ENCODE measurements at regions of chr9 and their contacts with region 1.

Region 1: GRCh38 chr9:272251-273213 is 57.9 kb downstream of the DOCK8 start:
- DNase-seq: peak in 3 of 4 experiments; percentile 26 to 85 (median 58)
- ATAC-seq: peak; percentile 87
- H3K4me3 ChIP-seq: peak overlapping the region; percentile 31; the same call in 1 of the 2 replicates
- H3K27ac ChIP-seq: peak overlapping the region; percentile 98
- H3K4me1 ChIP-seq: peaks cover 0 to 39% of the 10 kb centered on the region in 2 experiments; a peak in 2 of 5 replicates
- H3K27me3 ChIP-seq: no peaks in the 10 kb centered on the region
- CTCF ChIP-seq: no peak
- EP300 ChIP-seq: peak; percentile 90
- POLR2A ChIP-seq: peak; percentile 67
- RAD21 ChIP-seq: 0 out of 4 replicates have a peak, but pooled peaks of 1 of the 2 experiments have one; percentile 19

Region 2: DNA sequence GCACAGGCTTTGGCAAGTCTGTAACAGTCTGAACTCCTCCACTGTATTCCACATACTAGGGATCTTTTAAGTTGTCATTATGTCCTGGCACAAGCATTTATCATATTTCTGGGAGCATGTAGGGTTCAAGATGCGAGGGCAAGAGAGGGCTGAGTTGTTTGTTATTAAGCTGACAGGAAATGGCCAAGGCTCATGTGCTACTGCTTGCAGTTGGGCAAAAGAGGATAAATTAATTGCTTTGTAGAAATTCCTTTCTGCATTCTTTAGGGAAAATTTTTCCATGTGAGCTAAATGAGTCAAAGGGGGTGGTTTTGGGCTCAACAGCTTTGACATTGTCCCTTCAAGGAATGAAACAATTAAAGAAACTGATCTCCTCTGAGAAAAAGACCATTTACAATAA is 22.5 kb before region 1 on chr9:
- CTCF ChIA-PET with region 1: no interaction called
- POLR2A ChIA-PET with region 1: interaction called, 6 read pairs
- in situ Hi-C with region 1: no loop called
- intact Hi-C with region 1: loop called (anchors 1 kb)
- DNase-seq: no peak
- ATAC-seq: no peak
- H3K4me3 ChIP-seq: no peak overlapping the region
- H3K27ac ChIP-seq: peak overlapping the region; percentile 89
- H3K4me1 ChIP-seq: peaks cover 18 to 54% of the 10 kb centered on the region in 2 experiments; a peak in 4 of 5 replicates
- H3K27me3 ChIP-seq: no peaks in the 10 kb centered on the region
- CTCF ChIP-seq: no peak
- EP300 ChIP-seq: no peak
- POLR2A ChIP-seq: no peak
- RAD21 ChIP-seq: no peak

Region 3: GRCh38 chr9:257957-258356 is 14.6 kb before region 1 on chr9:
- CTCF ChIA-PET with region 1: no interaction called
- POLR2A ChIA-PET with region 1: interaction called, 12 read pairs
- in situ Hi-C with region 1: no loop called
- intact Hi-C with region 1: no loop called
- DNase-seq: no peak
- ATAC-seq: no peak; the same call in 2 of the 3 replicates
- H3K4me3 ChIP-seq: no peak overlapping the region
- H3K27ac ChIP-seq: peak overlapping the region; percentile 64; the same call in 2 of the 3 replicates
- H3K4me1 ChIP-seq: peaks cover 7 to 48% of the 10 kb centered on the region in 2 experiments
- H3K27me3 ChIP-seq: no peaks in the 10 kb centered on the region
- CTCF ChIP-seq: no peak
- EP300 ChIP-seq: no peak
- POLR2A ChIP-seq: no peak
- RAD21 ChIP-seq: no peak

Region 4: GRCh38 chr9:286071-286740 is 13.7 kb after region 1 on chr9:
- CTCF ChIA-PET with region 1: no interaction called
- POLR2A ChIA-PET with region 1: interaction called, 14 read pairs
- in situ Hi-C with region 1: no loop called
- intact Hi-C with region 1: no loop called
- DNase-seq: no peak
- ATAC-seq: no peak
- H3K4me3 ChIP-seq: no peak overlapping the region
- H3K27ac ChIP-seq: no peak overlapping the region
- H3K4me1 ChIP-seq: peaks cover 0 to 7% of the 10 kb centered on the region in 2 experiments; a peak in 2 of 5 replicates
- H3K27me3 ChIP-seq: no peaks in the 10 kb centered on the region
- CTCF ChIP-seq: no peak
- EP300 ChIP-seq: no peak
- POLR2A ChIP-seq: no peak
- RAD21 ChIP-seq: no peak